ENCODE measurements at regions of chr17 and their contacts with region 1.

Region 1: DNA sequence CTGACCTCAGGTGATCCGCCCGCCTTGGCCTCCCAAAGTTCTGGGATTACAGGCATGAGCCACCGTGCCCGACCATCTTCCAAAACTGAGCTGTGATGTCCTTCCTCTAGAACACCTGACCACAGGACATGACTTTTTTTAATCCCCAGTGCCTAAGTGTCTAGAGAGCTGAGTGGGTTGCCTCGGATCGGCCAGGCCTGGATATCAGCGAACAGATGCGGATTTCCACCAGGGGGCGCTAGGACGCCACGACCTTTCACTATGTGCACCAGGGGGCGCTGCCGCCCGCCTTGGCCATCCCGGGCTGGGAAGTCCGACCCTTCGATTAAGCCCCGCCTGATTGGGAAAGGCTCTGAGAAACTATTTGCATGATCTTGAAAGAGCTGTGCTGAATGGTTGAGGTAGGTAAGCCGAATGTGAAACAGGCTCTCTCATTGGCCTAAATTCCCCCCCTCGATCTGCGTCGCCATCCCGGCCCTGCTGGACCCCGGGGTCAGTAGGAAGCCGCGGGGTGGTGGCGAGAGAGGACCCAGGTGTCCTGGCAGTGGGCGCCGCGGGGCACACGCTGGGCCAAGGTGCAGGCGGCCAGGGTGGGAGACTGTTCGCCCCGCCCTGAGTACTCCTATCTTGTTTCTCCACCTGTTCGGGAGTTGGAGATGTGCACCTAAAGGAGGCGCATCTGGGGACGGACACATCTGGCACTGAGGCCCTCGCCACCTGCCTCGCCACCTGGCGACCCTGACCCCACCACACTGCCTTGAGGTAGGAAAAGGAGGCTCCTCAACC is at the start of gene ACBD4:
- H3K4me3 Mint-ChIP-seq: peak within 1 kb of the TSS; percentile 87
- H3K27ac Mint-ChIP-seq: peak within 1 kb of the TSS; percentile 82
- H3K4me1 Mint-ChIP-seq: peaks cover 25% of the 10 kb centered on the region
- H3K27me3 Mint-ChIP-seq: peaks cover 15% of the 10 kb centered on the region

Region 2: GRCh38 chr17:45197555-45198334 is 62.4 kb after region 1 on chr17:
- intact Hi-C with region 1: loop called (anchors 1 kb)
- H3K4me3 Mint-ChIP-seq: peak overlapping the region; percentile 9
- H3K27ac Mint-ChIP-seq: peak overlapping the region; percentile 56
- H3K4me1 Mint-ChIP-seq: peaks cover 39% of the 10 kb centered on the region
- H3K27me3 Mint-ChIP-seq: no peaks in the 10 kb centered on the region

Measured in dendritic cell treated with granulocyte-macrophage colony-stimulating factor and Interleukin-4, amounts not matched to agents 40 ng/mL and 50 ng/mL, for 4 days (primary cell).